Mammary epithelial cell (primary cell): ENCODE measurements at regions of chr17 and their contacts with region 1.

Region 1: DNA sequence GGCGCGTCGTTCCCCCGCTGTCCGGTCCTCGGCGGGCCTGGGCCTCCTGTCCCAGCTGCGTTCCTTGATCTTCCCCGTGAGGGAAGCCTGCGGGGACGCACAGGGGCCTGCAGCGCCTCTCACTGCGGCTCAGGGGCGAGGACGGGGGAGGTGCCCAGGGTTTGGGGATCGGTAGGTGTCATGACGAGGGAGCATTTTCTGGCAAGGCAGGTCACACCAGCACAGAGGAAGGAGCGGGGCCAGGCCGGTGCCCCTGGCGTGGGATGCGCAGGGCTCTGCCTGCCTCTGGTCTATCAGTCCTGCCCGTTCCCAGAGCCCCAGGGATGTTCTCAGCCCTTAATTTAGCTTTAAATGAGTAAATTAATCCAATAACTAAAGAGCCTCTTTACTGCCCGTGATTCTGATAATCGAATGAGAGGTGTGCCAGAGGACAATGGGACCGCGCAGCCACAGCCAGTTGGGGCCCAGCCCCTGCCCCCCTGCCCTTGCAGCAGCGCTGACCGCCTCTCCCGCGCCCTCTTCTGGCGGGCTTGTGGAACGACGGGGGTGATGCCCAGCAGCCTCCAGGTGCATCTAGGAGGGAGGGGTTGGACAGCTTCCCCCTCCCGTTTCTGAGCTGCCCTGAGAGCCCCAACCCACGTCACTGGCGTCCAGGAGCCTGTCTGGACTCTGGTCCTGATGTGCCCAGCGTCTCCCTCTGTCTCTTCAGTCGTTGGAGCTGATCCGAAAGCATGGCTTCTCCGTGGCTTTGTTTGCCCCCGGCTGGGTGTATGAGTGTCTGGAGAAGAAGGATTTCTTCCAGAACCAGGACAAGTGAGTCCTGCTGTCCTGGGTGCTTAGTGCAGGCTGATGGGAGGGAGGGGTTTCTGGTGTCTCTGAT is 7.9 kb downstream of the ENGASE start:
- DNase-seq: no peak
- H3K4me3 ChIP-seq: no peak overlapping the region
- H3K27ac ChIP-seq: no peak overlapping the region
- H3K4me1 ChIP-seq: no peaks in the 10 kb centered on the region
- H3K27me3 ChIP-seq: no peaks in the 10 kb centered on the region
- CTCF ChIP-seq: peak; percentile 61 to 90

Region 2: DNA sequence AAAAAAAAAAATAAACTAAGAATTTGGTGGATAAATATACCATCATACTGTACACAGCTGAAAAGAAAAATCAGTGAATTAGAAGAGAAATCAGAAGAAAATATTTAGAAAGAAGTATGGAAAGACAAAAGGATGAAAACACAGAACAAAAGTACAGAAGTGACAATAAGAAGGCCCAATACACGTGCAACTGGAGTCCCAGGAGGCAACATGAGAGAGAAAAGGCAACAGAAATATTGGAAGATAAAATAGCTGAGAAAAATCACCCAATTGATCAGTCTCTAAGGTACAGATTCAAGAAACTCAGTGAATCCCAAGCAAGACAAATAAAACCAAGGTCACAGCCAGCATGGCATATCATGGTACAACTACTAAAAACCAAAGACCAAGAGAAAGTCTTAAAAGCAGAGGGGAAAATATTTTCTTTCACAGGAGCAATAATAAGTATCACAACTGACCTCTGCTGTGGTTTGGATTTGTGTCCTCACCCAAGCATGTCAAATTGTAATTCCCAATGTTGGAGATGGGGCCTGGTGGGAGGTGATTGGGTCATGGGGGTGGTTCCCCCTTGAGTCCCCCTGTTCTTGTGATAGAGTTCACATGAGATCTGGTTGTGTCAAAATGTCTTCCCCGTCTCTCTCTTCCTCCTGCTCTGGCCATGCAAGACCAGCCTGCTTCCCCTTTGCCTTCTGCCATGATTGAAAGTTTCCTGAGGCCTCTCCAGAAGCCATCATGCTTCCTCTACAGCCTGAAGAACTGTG is 28.2 kb before region 1 on chr17:
- CTCF ChIA-PET with region 1: no interaction called
- dilution Hi-C with region 1: no loop called
- in situ Hi-C with region 1: no loop called
- intact Hi-C with region 1: no loop called
- DNase-seq: no peak
- H3K4me3 ChIP-seq: no peak overlapping the region
- H3K27ac ChIP-seq: no peak overlapping the region
- H3K4me1 ChIP-seq: no peaks in the 10 kb centered on the region
- H3K27me3 ChIP-seq: no peaks in the 10 kb centered on the region
- CTCF ChIP-seq: no peak

Region 3: GRCh38 chr17:79065105-79065670 is 17.4 kb before region 1 on chr17:
- CTCF ChIA-PET with region 1: no interaction called
- dilution Hi-C with region 1: no loop called
- in situ Hi-C with region 1: no loop called
- intact Hi-C with region 1: loop called (anchors 1 kb)
- DNase-seq: no peak
- H3K4me3 ChIP-seq: no peak overlapping the region
- H3K27ac ChIP-seq: no peak overlapping the region
- H3K4me1 ChIP-seq: no peaks in the 10 kb centered on the region
- H3K27me3 ChIP-seq: no peaks in the 10 kb centered on the region
- CTCF ChIP-seq: peak; percentile 39 to 52